Activated T-helper 1 cell treated with anti-CD3 and anti-CD28 coated beads, Interleukin-12 subunit alpha, Interleukin-12 subunit beta, Interleukin-2, Interleukin-4 antibody, amounts not matched to agents 30 ng/mL and 10 ng/mL and 1 ng/mL, durations not matched to agents 14 hours and 24 hours and 36 hours (primary cell): ENCODE measurements at regions of chr2 and their contacts with region 1.

Region 1: DNA sequence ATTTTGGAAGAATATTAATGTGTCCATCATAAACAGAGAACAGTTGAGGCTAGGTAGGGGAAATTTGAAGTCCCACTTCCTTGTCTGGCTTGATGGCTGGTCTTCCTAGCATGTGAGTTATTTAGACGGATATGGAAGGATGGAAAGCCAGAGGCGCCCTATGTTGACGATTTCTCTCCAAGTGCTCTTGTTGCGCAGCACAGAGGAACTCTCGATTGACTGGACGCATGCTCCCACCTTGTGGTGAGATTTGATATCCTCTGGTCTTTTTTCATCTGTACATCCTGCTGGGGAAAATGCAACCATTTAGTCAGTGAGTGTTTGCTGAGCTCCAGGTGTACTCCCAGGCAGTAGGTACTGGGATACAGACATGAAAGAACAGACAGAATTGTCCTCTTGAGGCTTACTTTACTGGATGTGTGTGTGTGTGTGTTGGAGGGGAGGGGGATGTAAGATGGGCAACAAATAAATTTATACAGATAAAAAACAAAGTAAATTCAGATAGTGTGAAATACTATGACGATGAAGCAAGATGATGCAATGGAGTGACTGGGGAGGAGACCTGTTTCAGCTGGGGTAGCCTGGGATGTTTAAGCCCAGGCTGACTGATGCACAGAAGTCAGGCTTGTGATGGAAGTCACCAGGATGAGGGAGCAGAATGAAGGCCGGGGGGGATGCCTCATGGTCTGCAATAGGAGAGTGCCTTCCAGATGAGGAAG is 137.2 kb downstream of the TRIM43 start:
- DNase-seq: peak; percentile 6
- H3K4me3 Mint-ChIP-seq: no peak overlapping the region
- H3K27ac Mint-ChIP-seq: no peak overlapping the region
- H3K4me1 Mint-ChIP-seq: no peaks in the 10 kb centered on the region
- H3K27me3 Mint-ChIP-seq: peaks cover 10% of the 10 kb centered on the region

Region 2: DNA sequence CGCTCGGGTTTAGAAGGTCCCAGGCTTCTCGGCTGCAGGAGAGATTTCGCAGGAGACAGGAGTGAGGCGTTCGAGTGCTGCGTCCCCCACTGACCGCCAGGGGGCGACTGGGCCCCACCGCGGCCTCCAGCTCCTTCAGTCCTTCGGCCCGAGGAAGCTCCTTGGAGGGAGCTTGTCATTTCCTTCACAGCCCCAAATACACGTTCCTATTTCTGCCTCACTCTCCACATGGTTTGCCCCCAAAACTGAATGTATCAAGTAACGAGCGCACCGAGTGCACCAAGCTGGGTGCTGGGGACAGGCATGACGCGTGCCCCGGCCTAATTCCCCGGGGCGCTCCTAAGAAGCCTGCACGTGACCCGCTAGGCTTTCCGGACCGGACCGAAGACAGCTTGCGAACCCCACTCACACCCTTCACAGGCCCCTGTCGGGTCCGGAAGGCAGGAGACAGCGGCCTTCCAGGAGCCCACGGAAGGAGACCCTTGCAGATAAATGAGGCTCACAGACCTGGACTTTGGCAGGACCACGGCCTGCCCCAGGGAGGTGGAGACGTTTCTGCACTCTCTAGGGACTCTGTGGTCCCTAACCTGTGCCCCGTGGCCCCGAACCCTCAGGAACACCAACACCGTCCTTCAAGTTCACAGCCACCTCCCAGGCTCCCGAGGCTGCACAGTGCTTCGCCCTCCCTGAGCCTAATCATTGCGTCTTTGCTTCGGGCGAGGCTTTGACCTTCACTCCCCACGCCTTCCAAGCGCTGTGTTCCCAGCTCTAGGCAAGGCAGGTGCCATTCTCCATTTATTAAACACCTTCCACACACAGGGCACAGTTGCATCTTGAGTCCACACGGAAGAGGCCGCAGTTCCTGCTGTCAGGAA is 339.6 kb before region 1 on chr2:
- intact Hi-C with region 1: loop called (anchors 1 kb)
- DNase-seq: peak; percentile 37
- H3K4me3 Mint-ChIP-seq: no peak overlapping the region
- H3K27ac Mint-ChIP-seq: no peak overlapping the region
- H3K4me1 Mint-ChIP-seq: no peaks in the 10 kb centered on the region
- H3K27me3 Mint-ChIP-seq: no peaks in the 10 kb centered on the region